ENCODE measurements at regions of chr9 and their contacts with region 1.

Region 1: DNA sequence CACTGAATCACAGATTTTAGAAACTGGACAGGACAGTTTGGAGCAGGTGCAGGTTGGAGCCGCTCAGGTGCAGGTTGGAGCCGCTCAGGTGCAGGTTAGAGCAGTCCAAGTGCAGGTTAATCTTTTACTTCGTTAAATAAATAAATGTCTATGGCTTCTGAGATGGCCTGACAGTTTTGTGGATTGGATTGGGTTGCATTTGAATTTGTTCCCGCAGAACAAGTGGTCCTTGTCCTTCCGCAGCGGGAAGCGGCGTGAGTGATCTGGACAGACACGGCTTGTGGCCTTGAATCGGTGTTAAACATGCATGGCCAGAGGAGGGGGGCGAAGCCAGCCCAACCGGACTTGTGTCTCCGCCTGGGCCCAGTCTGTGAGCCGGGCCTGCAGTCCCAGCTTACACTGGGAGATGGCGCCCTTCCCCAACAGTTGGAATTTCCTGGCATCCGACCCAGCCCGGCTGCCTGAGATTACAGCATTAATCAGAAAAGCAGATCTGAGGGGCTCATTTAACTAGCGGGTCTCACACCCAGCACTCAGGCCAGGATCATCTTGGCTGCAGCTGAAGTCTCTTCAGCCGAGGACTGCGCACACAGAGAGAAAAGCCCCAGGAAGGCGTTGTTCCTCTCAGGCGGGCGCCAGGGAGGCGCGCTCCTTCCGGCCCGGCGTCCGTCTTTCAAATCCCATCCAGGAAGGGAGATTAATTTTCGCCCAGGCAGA is 1.5 kb upstream of the OLFM1 start:
- DNase-seq: peak; percentile 82 to 95 (median 88)
- H3K4me3 ChIP-seq: peak overlapping the region in 1 of 4 donors; percentile 28
- H3K27ac ChIP-seq: peak overlapping the region in 1 of 5 donors; percentile 51
- H3K4me1 ChIP-seq: peaks cover 4 to 27% of the 10 kb centered on the region in 2 donors
- H3K27me3 ChIP-seq: peaks cover 23% of the 10 kb centered on the region
- CTCF ChIP-seq: peak; percentile 85 to 99 (median 96)
- POLR2A ChIP-seq: no peak

Region 2: DNA sequence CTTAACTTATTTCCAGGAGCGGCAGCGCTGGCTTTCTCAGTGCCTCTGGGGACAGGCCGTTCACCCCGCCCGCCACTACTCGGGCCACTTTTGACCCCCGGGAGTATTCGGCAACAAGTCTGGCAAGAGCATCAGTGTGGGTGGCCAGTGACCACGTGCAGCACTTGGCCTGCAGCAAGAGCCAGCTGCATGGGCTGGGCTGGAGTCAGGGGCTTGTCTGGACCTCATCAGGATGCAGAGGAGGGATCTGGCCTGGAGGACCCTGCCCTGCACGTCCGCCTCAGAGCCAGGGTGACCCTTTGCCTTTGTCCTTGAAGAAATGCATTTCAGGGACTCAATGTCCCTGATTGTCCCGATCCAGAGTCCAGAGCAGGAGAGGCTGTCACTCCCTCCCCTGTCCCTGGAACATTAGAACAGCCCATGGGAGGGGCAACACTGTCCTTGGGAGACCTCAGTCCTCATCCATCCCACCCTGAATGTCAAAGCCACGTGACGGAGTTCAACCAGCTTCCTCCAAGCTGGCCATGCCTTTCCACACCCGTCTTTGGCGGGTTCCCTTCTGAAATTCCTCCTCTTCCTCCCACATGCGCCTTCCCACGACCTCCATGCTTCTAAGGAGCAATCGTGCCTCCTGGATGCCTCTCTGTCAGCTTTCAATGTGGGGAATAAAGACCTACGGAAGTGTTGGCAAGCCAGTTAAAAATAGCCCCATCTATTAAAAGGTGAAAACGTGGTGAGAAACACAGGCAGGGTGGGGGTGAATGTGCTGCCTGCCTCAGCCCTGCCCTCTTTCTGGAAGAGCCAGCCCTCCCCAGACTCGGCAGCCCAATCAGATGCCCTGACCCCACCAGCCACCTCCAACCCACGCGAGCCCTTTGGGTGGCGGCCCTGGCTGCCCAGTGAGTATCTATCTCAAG is 100.5 kb after region 1 on chr9:
- intact Hi-C with region 1: no loop called
- DNase-seq: peak in 6 of 7 donors; percentile 34 to 77 (median 53)
- H3K4me3 ChIP-seq: no peak overlapping the region
- H3K27ac ChIP-seq: peak overlapping the region in 2 of 5 donors; percentile 27 to 53
- H3K4me1 ChIP-seq: no peaks in the 10 kb centered on the region
- H3K27me3 ChIP-seq: no peaks in the 10 kb centered on the region
- CTCF ChIP-seq: no peak
- POLR2A ChIP-seq: no peak

Region 3: DNA sequence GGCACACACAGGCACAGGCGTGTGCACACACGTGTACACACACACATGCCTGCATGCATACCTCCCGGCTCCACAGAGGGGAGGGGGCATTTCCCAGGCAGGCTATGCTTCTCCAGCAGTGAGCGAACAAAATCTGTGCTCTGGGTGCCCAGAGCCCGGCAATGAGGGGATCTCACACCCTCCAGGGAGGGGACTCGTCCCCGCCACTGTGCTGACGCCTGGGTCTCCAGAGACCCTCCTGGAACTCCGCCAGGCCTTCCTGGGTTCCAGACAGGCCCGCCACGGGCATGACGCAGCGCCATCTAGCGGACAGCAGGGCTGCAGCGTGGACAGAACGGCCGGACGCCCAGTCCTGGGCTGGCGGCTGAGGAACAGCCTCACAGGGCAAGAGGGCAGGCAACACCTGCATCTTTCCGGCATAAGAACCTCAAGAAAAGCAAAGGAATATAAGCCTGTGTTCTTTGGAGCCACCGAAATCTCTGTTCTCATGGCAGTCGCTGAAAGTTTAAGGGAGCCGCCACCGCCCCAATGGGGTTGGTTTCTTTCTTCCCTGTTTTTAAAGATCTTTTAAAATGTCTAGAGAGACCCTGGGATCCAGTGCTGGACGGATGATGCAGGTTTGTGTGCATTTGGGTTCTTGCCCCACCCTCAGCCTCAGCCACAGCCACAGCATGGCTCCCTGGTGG is 258.0 kb after region 1 on chr9:
- intact Hi-C with region 1: loop called (anchors 2 to 5 kb)
- DNase-seq: peak; percentile 48 to 77 (median 69)
- H3K4me3 ChIP-seq: no peak overlapping the region
- H3K27ac ChIP-seq: no peak overlapping the region
- H3K4me1 ChIP-seq: no peaks in the 10 kb centered on the region
- H3K27me3 ChIP-seq: peaks cover 5% of the 10 kb centered on the region
- CTCF ChIP-seq: peak; percentile 77 to 95 (median 86)
- POLR2A ChIP-seq: no peak

Region 4: GRCh38 chr9:135410831-135411473 is 325.0 kb after region 1 on chr9:
- intact Hi-C with region 1: loop called (anchors 2 to 5 kb)
- DNase-seq: no peak
- H3K4me3 ChIP-seq: no peak overlapping the region
- H3K27ac ChIP-seq: no peak overlapping the region
- H3K4me1 ChIP-seq: no peaks in the 10 kb centered on the region
- H3K27me3 ChIP-seq: peaks cover 6% of the 10 kb centered on the region
- CTCF ChIP-seq: no peak
- POLR2A ChIP-seq: no peak

Measured in adrenal gland (tissue), 19 donors.